ENCODE measurements at regions of chr16 and their contacts with region 1.

Region 1: DNA sequence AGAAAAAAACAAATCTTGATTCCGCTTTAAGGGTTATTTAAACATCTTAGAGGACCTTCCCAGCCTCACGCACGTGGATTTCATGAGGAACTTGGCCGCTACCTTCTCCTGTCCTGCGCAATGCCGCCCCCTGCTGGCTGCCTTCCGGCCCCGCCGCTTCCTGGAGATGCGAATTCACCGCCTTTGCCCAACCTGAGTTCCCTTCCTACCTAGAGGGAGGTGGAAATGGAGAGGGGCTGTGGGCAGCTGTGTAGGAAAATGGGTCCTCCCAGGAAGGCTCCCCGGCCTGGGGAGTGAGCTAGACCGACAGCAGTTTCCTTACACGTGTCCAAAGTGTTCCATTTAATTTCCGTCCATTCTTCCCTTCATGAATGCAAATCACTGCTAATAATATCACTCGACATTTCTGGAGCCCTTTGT is 1.0 kb upstream of the ABCC12 start:
- DNase-seq: peak; percentile 94
- H3K4me3 ChIP-seq: no peak overlapping the region
- H3K27ac ChIP-seq: no peak overlapping the region
- H3K4me1 ChIP-seq: peaks cover 3 to 9% (median 6%) of the 10 kb centered on the region in 4 donors
- H3K27me3 ChIP-seq: peaks cover 0 to 21% (median 0%) of the 10 kb centered on the region in 4 donors
- CTCF ChIP-seq: peak; percentile 64 to 96 (median 82)
- EP300 ChIP-seq: no peak
- POLR2A ChIP-seq: no peak

Region 2: GRCh38 chr16:46947900-46948547 is 1208.8 kb before region 1 on chr16:
- intact Hi-C with region 1: loop called (anchors 5 kb)
- DNase-seq: no peak
- H3K4me3 ChIP-seq: no peak overlapping the region
- H3K27ac ChIP-seq: no peak overlapping the region
- H3K4me1 ChIP-seq: no peaks in the 10 kb centered on the region
- H3K27me3 ChIP-seq: no peaks in the 10 kb centered on the region
- CTCF ChIP-seq: peak; percentile 19 to 40 (median 26)
- EP300 ChIP-seq: no peak
- POLR2A ChIP-seq: no peak

Region 3: DNA sequence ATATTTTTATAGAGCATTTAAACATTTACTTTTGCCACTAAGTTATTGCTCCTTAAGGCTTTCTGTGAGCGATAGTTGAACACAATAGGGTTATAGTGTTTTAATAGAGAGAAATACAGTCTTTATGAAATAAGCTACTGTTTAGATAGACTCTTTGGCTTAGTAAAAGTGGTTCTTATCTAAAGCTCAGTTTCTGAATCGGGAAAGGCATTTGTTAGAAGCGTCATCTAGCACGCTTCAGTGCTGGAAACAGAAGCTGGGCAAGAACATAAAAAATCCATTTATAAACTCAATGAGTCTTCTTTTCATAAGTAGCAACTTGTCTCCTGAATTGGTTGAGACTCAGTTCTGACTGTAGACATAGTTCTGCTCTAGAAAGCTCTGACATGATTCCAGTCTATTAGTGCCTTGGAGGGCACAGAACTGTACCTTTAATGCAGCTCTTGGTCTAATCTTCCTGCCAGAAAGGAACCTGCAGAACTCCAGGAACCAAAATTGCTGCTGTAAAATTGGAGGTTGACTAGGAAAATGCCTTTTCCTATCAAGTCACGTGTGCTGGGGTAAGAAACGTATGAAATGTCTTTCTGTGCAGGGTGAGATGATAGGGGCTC is 1127.9 kb before region 1 on chr16:
- intact Hi-C with region 1: no loop called
- DNase-seq: no peak
- H3K4me3 ChIP-seq: no peak overlapping the region
- H3K27ac ChIP-seq: no peak overlapping the region
- H3K4me1 ChIP-seq: no peaks in the 10 kb centered on the region
- H3K27me3 ChIP-seq: no peaks in the 10 kb centered on the region
- CTCF ChIP-seq: no peak
- EP300 ChIP-seq: no peak
- POLR2A ChIP-seq: no peak

Region 4: GRCh38 chr16:47979164-47979520 is 177.7 kb before region 1 on chr16:
- intact Hi-C with region 1: no loop called
- DNase-seq: peak; percentile 74
- H3K4me3 ChIP-seq: no peak overlapping the region
- H3K27ac ChIP-seq: no peak overlapping the region
- H3K4me1 ChIP-seq: peaks cover 0 to 4% (median 0%) of the 10 kb centered on the region in 4 donors
- H3K27me3 ChIP-seq: peaks cover 0 to 3% (median 0%) of the 10 kb centered on the region in 4 donors
- CTCF ChIP-seq: no peak
- EP300 ChIP-seq: no peak
- POLR2A ChIP-seq: no peak